AG04449 (cell line): ENCODE measurements at regions of chr12 and their contacts with region 1.

Region 1: GRCh38 chr12:122123051-122123760 is 44.6 kb downstream of the MLXIP start:
- DNase-seq: no peak
- H3K4me3 ChIP-seq: no peak overlapping the region; the same call in 1 of the 2 replicates
- CTCF ChIP-seq: peak; percentile 59

Region 2: DNA sequence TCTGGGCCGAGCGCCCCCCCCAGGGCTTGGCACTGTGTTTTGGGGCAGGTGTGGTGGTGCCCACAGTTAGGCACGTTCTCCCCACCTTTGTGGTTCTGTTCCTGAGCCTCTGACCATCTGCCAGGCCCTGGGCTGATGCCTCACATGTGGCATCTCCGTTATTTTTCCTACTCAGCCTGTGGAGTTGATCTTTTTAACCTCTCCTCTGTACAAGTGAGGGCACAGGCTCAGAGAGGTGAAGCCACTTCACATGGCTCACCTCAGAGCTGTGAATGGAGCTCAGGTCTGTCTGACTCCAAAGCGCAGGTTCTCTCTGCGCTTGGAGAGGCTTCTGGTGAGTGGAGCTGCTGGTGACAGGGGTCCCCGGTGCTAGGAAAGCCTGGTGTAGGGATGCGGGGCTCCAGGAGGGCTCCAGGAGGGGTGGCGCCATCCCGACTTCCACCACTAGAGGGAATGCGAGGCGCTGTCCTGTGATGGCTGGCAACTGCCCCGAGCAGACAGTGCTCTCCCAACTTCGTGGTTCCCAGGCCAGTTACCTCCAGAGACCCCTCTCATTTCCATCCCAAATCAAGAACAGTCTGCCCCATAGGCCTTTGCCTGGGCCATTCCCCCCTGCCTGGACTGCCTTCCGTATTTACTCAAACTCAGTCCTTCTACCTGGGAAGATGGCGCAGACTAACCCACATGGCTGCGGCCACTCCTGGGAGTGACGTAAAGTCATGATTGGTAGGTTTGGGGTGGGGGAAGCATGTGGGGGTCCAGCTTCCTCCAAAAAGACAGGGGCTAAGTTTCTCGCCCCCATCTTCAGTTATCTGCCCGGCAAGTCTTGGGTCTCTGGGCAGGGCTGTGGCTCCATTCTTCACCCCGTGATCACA is 91.6 kb before region 1 on chr12:
- CTCF ChIA-PET with region 1: interaction called, 17 read pairs
- POLR2A ChIA-PET with region 1: no interaction called
- DNase-seq: no peak
- H3K4me3 ChIP-seq: no peak overlapping the region
- CTCF ChIP-seq: peak; percentile 84

Region 3: DNA sequence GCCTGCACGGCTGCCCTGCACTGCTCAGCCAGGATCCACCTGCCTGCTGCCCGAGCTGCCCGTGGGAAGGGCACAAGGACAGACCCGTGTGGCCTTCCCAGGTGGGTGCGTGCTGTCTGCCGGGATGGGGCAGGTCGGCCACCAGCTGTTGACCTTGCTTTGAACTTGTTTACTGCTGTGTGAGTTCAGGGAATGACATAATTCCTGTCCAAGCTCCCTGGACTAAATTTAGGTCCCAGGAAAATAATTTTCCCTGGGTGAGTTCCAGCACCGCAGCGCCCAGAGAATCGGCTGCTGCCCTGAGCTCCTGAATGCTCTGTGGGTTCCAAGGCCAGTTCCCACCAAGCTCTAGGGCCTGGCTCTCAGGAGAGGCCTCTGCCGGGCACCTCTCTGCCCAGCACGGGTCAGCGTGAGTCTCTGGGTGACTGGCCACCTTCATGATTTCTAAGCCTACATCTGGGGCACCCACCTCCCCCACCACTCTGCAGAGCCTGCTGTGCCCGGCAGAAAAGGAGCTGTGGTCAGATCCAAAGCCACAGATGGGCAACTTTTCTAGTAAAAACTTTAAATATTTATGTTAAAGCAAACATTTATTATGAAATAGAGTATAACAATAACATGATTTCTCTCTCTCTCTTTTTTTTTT is 71.9 kb before region 1 on chr12:
- CTCF ChIA-PET with region 1: interaction called, 504 read pairs
- POLR2A ChIA-PET with region 1: no interaction called
- DNase-seq: no peak
- H3K4me3 ChIP-seq: no peak overlapping the region
- CTCF ChIP-seq: no peak

Region 4: GRCh38 chr12:122072031-122072970 is 50.9 kb before region 1 on chr12:
- CTCF ChIA-PET with region 1: interaction called, 19 read pairs
- POLR2A ChIA-PET with region 1: no interaction called
- DNase-seq: peak; percentile 83
- H3K4me3 ChIP-seq: 0 out of 2 replicates have a peak overlapping the region, but pooled peaks have one; percentile 4
- CTCF ChIP-seq: no peak

Region 5: GRCh38 chr12:122090759-122091515 is 32.3 kb before region 1 on chr12:
- CTCF ChIA-PET with region 1: interaction called, 33 read pairs
- POLR2A ChIA-PET with region 1: no interaction called
- DNase-seq: peak; percentile 94
- H3K4me3 ChIP-seq: no peak overlapping the region
- CTCF ChIP-seq: no peak

Region 6: DNA sequence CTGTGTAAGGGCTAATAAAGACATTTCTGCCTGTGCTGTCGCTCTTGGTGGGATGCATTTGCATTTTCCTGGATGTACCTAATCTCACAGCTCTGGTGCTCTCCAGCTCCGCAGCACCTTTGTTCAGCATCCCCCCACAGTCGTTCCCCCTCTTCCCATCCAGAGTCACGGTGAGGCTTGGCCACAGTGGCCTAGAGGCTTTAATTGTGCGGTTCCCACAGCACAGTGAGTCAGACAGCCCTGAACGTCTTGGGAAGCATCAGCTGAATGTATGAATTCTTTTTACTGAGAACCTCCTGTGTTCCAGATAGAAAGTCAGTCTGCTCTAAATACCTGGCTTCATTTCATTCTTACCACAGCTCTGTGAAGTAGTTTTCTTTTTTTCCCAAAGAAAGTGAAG is 15.9 kb before region 1 on chr12:
- CTCF ChIA-PET with region 1: interaction called, 85 read pairs
- POLR2A ChIA-PET with region 1: no interaction called
- DNase-seq: no peak
- H3K4me3 ChIP-seq: no peak overlapping the region
- CTCF ChIP-seq: no peak